Activated B cell treated with CpG ODN at 0.5 μM for 24 hours (primary cell): ENCODE measurements at regions of chr3 and their contacts with region 1.

Region 1: DNA sequence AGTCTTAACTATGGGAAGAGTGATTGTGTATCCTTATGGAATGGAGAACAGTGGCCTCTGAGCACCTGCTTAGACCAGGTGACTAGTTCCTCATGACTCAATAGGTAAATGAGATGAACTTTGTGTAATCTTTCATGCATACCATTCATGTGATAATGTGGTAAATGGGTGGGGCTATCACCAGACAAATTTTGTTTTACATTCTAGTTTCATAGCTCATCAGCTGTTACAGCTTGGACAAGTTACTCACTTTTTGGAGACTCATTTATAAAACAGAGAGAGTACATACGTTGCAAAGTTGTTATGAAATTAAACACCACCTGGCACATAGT is 103.7 kb upstream of the TGFBR2 start:
- DNase-seq: no peak
- ATAC-seq: peak; percentile 66
- H3K4me3 Mint-ChIP-seq: peak overlapping the region; percentile 74
- H3K27ac Mint-ChIP-seq: peak overlapping the region; percentile 95
- H3K4me1 Mint-ChIP-seq: peaks cover 64% of the 10 kb centered on the region
- H3K27me3 Mint-ChIP-seq: no peaks in the 10 kb centered on the region
- CTCF ChIP-seq: no peak

Region 2: DNA sequence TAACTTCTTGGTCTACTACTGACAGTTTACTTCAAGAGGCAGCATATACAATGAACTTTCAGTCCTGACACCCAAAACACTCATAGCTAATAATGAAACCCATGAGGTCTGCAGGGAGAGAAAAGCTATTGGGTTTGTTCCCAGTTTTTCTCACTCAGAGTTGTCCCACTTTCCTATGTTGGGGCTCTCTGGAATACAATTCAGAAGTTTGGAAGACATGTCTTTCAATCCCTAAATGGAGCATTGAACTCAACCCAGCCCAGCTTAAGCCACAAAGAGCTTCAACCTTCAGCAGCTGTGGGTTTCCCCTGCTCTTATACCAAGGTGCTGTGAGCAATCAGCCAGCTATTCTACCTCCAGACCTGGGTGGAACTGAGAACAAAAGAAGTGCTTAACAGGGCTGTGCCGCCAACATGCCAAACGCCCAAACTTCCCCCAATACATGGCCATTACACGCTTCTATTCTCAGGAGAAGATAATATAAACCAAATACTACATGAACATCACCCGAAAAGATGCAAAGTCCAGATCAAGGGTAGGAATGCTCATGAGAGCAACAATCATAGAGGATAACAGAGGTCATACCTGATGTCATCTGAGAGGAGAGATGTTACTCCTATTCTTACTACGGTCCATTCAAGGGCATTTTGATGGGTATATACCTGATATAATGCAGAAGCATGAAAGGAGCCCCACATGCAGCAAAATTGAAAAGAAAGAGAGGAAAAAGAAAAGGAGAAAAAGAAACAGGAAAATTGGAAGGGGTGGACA is 27.5 kb before region 1 on chr3:
- CTCF ChIA-PET with region 1: interaction called, 4 read pairs
- POLR2A ChIA-PET with region 1: interaction called, 10 read pairs
- intact Hi-C with region 1: loop called (anchors 1 kb)
- DNase-seq: no peak
- ATAC-seq: peak; percentile 94
- H3K4me3 Mint-ChIP-seq: peak overlapping the region; percentile 54
- H3K27ac Mint-ChIP-seq: peak overlapping the region; percentile 75
- H3K4me1 Mint-ChIP-seq: peaks cover 76% of the 10 kb centered on the region
- H3K27me3 Mint-ChIP-seq: no peaks in the 10 kb centered on the region
- CTCF ChIP-seq: no peak

Region 3: GRCh38 chr3:30623351-30623750 is 120.6 kb after region 1 on chr3:
- CTCF ChIA-PET with region 1: interaction called, 5 read pairs
- POLR2A ChIA-PET with region 1: interaction called, 13 read pairs
- intact Hi-C with region 1: loop called (anchors 1 kb)
- DNase-seq: no peak
- ATAC-seq: peak; percentile 45
- H3K4me3 Mint-ChIP-seq: peak overlapping the region; percentile 70
- H3K27ac Mint-ChIP-seq: peak overlapping the region; percentile 91
- H3K4me1 Mint-ChIP-seq: peaks cover 94% of the 10 kb centered on the region
- H3K27me3 Mint-ChIP-seq: no peaks in the 10 kb centered on the region
- CTCF ChIP-seq: no peak

Region 4: GRCh38 chr3:30644593-30645012 is 141.9 kb after region 1 on chr3:
- CTCF ChIA-PET with region 1: no interaction called
- POLR2A ChIA-PET with region 1: interaction called, 3 read pairs
- intact Hi-C with region 1: loop called (anchors 1 kb)
- DNase-seq: no peak
- ATAC-seq: peak; percentile 38
- H3K4me3 Mint-ChIP-seq: peak overlapping the region; percentile 68
- H3K27ac Mint-ChIP-seq: peak overlapping the region; percentile 91
- H3K4me1 Mint-ChIP-seq: peaks cover 98% of the 10 kb centered on the region
- H3K27me3 Mint-ChIP-seq: no peaks in the 10 kb centered on the region
- CTCF ChIP-seq: no peak